H1 (cell line): ENCODE measurements at regions of chr18 and their contacts with region 1.

Region 1: DNA sequence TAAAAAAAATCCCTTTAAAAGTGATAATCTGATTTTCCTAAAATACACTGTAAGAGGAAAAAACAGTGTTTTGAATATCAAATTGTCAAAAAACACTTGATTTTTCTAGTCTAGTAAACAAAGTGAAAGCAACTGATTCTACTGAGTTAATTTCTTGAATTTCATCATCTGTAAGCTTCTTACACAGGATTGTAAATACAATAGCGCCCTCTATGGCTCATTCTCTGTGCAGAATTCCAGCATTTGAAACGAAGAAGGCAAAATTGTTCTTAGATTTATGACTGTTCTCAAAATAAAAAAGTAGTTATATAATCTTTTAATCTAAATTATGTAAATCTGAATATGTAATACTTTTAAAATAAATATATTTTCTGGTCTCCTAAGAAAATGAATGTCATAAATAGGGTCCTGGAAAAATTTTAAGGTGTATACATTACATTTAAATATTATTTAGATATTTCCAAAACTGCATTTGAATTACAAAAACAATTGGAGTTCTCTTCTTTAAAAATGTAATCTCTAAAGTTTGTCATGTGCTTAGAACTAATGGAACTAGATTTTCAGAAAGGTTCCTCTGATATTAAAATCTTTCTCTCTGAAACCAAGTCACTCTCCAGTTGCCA is 176.9 kb upstream of the MC4R start:
- DNase-seq: peak in 1 of 2 experiments; percentile 15
- H3K4me3 ChIP-seq: no peak overlapping the region
- H3K27ac ChIP-seq: no peak overlapping the region
- H3K4me1 ChIP-seq: no peaks in the 10 kb centered on the region
- H3K27me3 ChIP-seq: no peaks in the 10 kb centered on the region
- CTCF ChIP-seq: peak in 2 of 3 experiments; percentile 41 to 65; a peak in 2 of 4 replicates
- EP300 ChIP-seq: no peak
- POLR2A ChIP-seq: no peak
- RAD21 ChIP-seq: peak; percentile 80 to 88

Region 2: DNA sequence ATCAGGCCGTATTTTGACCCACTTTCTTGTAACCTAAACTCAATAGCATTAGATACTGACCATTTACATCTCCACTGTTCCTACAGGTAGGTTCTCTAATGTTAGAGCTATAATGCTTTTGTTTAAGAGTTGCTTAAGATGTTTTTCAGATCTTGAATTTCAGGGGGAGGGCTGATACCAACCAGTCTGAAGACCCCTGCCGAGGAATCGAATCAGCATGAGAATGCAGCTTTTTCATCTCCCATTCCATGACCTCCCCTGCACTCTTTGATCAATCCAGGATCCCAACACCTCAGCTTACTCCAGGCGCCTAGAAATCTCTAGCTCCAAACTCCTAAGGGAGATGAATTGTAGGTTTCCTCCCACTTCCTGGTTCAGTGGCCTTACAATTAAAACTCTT is 56.4 kb before region 1 on chr18:
- CTCF ChIA-PET with region 1: no interaction called
- POLR2A ChIA-PET with region 1: no interaction called
- DNase-seq: peak; percentile 34 to 53
- H3K4me3 ChIP-seq: no peak overlapping the region
- H3K27ac ChIP-seq: no peak overlapping the region
- H3K4me1 ChIP-seq: no peaks in the 10 kb centered on the region
- H3K27me3 ChIP-seq: peaks cover 19 to 58% (median 32%) of the 10 kb centered on the region in 4 experiments
- CTCF ChIP-seq: no peak
- EP300 ChIP-seq: peak in 1 of 2 experiments; percentile 70; a peak in 1 of 3 replicates
- POLR2A ChIP-seq: no peak
- RAD21 ChIP-seq: no peak

Region 3: DNA sequence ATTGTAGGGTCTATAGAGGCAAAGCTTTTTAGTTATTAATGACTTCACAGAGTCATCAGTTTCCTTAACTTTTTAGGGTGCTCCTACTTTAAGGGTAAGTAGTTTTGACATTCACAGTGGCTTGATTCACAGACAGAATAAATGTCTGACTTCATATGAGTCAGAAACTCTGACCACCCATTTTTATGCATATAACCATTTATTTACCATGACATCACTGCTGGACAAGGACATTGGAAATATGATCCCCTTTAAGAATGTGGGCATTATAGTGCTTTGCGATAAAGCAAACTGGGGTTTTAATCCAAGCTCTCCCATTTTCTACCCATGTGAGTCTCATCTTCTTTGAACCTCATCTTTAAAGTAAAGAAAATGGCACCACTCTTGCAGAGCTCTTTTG is 14.9 kb before region 1 on chr18:
- CTCF ChIA-PET with region 1: interaction called, 11 read pairs
- POLR2A ChIA-PET with region 1: no interaction called
- DNase-seq: no peak
- H3K4me3 ChIP-seq: no peak overlapping the region
- H3K27ac ChIP-seq: no peak overlapping the region
- H3K4me1 ChIP-seq: peaks cover 0 to 3% (median 0%) of the 10 kb centered on the region in 4 experiments; a peak in 2 of 7 replicates
- H3K27me3 ChIP-seq: no peaks in the 10 kb centered on the region
- CTCF ChIP-seq: no peak
- EP300 ChIP-seq: no peak
- POLR2A ChIP-seq: no peak
- RAD21 ChIP-seq: no peak